ENCODE measurements at regions of chr9 and their contacts with region 1.

Region 1: GRCh38 chr9:91047993-91048607 is 246.5 kb downstream of the SYK start:
- DNase-seq: peak; percentile 83
- H3K4me3 Mint-ChIP-seq: peak overlapping the region; percentile 72
- H3K27ac Mint-ChIP-seq: peak overlapping the region; percentile 93
- H3K4me1 Mint-ChIP-seq: peaks cover 64% of the 10 kb centered on the region
- H3K27me3 Mint-ChIP-seq: no peaks in the 10 kb centered on the region

Region 2: GRCh38 chr9:91071185-91071990 is 23.3 kb after region 1 on chr9:
- intact Hi-C with region 1: loop called (anchors 1 kb)
- DNase-seq: peak; percentile 84
- H3K4me3 Mint-ChIP-seq: peak overlapping the region; percentile 50
- H3K27ac Mint-ChIP-seq: peak overlapping the region; percentile 96
- H3K4me1 Mint-ChIP-seq: peaks cover 17% of the 10 kb centered on the region
- H3K27me3 Mint-ChIP-seq: no peaks in the 10 kb centered on the region

Region 3: GRCh38 chr9:91131433-91131839 is 83.3 kb after region 1 on chr9:
- intact Hi-C with region 1: loop called (anchors 1 kb)
- DNase-seq: peak; percentile 93
- H3K4me3 Mint-ChIP-seq: peak overlapping the region; percentile 69
- H3K27ac Mint-ChIP-seq: peak overlapping the region; percentile 93
- H3K4me1 Mint-ChIP-seq: peaks cover 45% of the 10 kb centered on the region
- H3K27me3 Mint-ChIP-seq: no peaks in the 10 kb centered on the region

Region 4: GRCh38 chr9:91346652-91347051 is 298.6 kb after region 1 on chr9:
- intact Hi-C with region 1: loop called (anchors 1 kb)
- DNase-seq: peak; percentile 69
- H3K4me3 Mint-ChIP-seq: no peak overlapping the region
- H3K27ac Mint-ChIP-seq: peak overlapping the region; percentile 49
- H3K4me1 Mint-ChIP-seq: peaks cover 40% of the 10 kb centered on the region
- H3K27me3 Mint-ChIP-seq: no peaks in the 10 kb centered on the region